GM23248 (cell line): ENCODE measurements at regions of chr17 and their contacts with region 1.

Region 1: GRCh38 chr17:38405654-38406053 is 22.6 kb upstream of the ARHGAP23 start:
- DNase-seq: no peak
- H3K4me3 ChIP-seq: no peak overlapping the region
- H3K27ac ChIP-seq: no peak overlapping the region
- H3K4me1 ChIP-seq: no peaks in the 10 kb centered on the region
- H3K27me3 ChIP-seq: no peaks in the 10 kb centered on the region

Region 2: DNA sequence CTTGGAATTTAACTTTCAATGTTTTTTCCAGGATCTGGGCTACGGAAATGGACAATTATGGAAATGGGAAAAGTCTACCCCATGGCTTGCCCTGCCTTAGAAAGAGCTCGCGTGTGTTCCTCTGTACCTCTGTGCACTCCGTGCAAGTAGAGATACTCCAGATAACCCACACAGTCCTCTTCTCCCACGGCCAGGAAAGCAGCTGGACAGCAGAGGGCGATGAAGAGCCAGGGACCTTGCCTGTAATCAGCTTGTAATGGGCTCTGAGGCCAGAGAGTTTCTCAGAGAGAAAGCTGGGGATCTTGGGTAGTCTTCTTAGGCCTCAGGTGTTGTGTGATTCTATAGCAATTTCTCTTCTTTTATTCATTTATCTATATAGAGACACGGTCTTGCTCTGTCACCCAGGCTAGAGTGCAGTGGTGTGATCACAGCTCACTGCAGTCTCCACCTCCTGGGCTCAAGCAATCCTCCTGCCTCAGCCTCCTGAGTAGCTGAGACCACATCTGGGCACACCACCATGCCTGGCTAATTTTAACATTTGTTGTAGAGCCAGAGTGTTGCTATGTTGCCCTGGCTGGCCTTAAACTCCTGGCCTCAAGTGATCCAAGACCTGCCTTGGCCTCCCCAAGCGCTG is 56.4 kb before region 1 on chr17:
- in situ Hi-C with region 1: loop called (anchors 5 kb)
- DNase-seq: peak; percentile 86
- H3K4me3 ChIP-seq: no peak overlapping the region
- H3K27ac ChIP-seq: no peak overlapping the region
- H3K4me1 ChIP-seq: peaks cover 11% of the 10 kb centered on the region
- H3K27me3 ChIP-seq: no peaks in the 10 kb centered on the region